CD8-positive, alpha-beta T cell (primary cell): ENCODE measurements at regions of chr9 and their contacts with region 1.

Region 1: GRCh38 chr9:128296337-128297220 is 20.5 kb downstream of the SWI5 start:
- DNase-seq: no peak
- ATAC-seq: no peak
- H3K4me3 ChIP-seq: no peak overlapping the region
- H3K4me3 Mint-ChIP-seq: no peak overlapping the region
- H3K27ac ChIP-seq: no peak overlapping the region
- H3K27ac Mint-ChIP-seq: no peak overlapping the region
- H3K4me1 ChIP-seq: no peaks in the 10 kb centered on the region
- H3K4me1 Mint-ChIP-seq: peaks cover 3% of the 10 kb centered on the region
- H3K27me3 ChIP-seq: no peaks in the 10 kb centered on the region
- H3K27me3 Mint-ChIP-seq: no peaks in the 10 kb centered on the region
- CTCF ChIP-seq: no peak

Region 2: DNA sequence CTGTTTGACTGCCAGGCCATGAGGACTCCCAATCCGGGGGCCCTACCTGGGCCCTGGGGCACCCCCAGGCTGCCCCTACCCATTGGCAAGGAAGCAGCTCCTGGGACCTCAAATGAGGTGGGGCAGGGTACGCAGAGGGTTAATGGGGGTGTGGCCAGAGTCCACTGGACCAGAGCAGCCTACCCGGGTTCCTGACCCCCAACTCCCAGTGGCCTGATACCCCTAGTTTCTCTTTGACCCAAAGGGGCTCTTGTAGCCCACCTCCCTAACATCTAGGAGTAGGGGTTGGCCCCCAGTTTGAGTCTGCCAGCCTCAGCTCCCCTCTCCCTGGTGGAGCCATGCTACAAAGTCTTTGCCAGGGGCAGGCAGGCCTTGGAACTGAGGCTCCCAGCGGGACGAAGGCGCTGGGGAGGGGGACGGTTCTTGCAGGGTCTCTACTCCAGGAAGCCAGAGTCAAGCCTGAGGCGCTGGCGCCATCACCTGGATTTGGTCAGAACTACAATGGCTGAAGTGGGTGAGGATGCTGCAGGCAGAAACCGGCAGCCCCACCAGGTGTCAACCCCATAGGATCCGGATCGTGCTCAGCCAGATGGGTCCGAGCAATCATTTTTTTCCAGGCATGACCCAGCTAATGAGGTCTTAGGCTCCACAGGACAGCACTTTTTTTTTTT is 115.7 kb after region 1 on chr9:
- CTCF ChIA-PET with region 1: interaction called, 4 read pairs
- POLR2A ChIA-PET with region 1: no interaction called
- intact Hi-C with region 1: loop called in 1 of 2 experiments (anchors 1 kb)
- DNase-seq: peak in 7 of 9 experiments; percentile 39 to 58 (median 49)
- ATAC-seq: peak; percentile 81
- H3K4me3 ChIP-seq: no peak overlapping the region
- H3K4me3 Mint-ChIP-seq: no peak overlapping the region
- H3K27ac ChIP-seq: no peak overlapping the region
- H3K27ac Mint-ChIP-seq: no peak overlapping the region
- H3K4me1 ChIP-seq: no peaks in the 10 kb centered on the region
- H3K4me1 Mint-ChIP-seq: no peaks in the 10 kb centered on the region
- H3K27me3 ChIP-seq: peaks cover 0 to 12% of the 10 kb centered on the region in 2 experiments
- H3K27me3 Mint-ChIP-seq: peaks cover 57% of the 10 kb centered on the region
- CTCF ChIP-seq: peak; percentile 46

Region 3: GRCh38 chr9:128455849-128456612 is 159.5 kb after region 1 on chr9 and contains the start of gene ODF2:
- CTCF ChIA-PET with region 1: no interaction called
- POLR2A ChIA-PET with region 1: no interaction called
- intact Hi-C with region 1: no loop called
- DNase-seq: peak; percentile 96 to 99 (median 99)
- ATAC-seq: peak; percentile 90
- H3K4me3 ChIP-seq: peak within 1 kb of the TSS; percentile 74 to 87
- H3K4me3 Mint-ChIP-seq: peak within 1 kb of the TSS; percentile 89
- H3K27ac ChIP-seq: peak within 1 kb of the TSS; percentile 87
- H3K27ac Mint-ChIP-seq: peak within 1 kb of the TSS; percentile 91
- H3K4me1 ChIP-seq: peaks cover 8% of the 10 kb centered on the region
- H3K4me1 Mint-ChIP-seq: peaks cover 22% of the 10 kb centered on the region
- H3K27me3 ChIP-seq: no peaks in the 10 kb centered on the region
- H3K27me3 Mint-ChIP-seq: no peaks in the 10 kb centered on the region
- CTCF ChIP-seq: no peak
- total RNA-seq, gene ODF2: 15.0 to 17.2 TPM